Lower leg skin (tissue), 4 donors: ENCODE measurements at regions of chr2 and their contacts with region 1.

Region 1: GRCh38 chr2:42931146-42931817 is 138.9 kb upstream of the HAAO start:
- DNase-seq: no peak
- H3K4me3 ChIP-seq: no peak overlapping the region
- CTCF ChIP-seq: no peak
- POLR2A ChIP-seq: no peak

Region 2: GRCh38 chr2:42859006-42859552 is 72.2 kb before region 1 on chr2:
- intact Hi-C with region 1: loop called (anchors 10 kb)
- DNase-seq: peak; percentile 65 to 85
- H3K4me3 ChIP-seq: no peak overlapping the region
- CTCF ChIP-seq: peak in 1 of 3 donors; percentile 66
- POLR2A ChIP-seq: no peak